Heart right ventricle (tissue), 16 donors: ENCODE measurements at regions of chr1 and their contacts with region 1.

Region 1: DNA sequence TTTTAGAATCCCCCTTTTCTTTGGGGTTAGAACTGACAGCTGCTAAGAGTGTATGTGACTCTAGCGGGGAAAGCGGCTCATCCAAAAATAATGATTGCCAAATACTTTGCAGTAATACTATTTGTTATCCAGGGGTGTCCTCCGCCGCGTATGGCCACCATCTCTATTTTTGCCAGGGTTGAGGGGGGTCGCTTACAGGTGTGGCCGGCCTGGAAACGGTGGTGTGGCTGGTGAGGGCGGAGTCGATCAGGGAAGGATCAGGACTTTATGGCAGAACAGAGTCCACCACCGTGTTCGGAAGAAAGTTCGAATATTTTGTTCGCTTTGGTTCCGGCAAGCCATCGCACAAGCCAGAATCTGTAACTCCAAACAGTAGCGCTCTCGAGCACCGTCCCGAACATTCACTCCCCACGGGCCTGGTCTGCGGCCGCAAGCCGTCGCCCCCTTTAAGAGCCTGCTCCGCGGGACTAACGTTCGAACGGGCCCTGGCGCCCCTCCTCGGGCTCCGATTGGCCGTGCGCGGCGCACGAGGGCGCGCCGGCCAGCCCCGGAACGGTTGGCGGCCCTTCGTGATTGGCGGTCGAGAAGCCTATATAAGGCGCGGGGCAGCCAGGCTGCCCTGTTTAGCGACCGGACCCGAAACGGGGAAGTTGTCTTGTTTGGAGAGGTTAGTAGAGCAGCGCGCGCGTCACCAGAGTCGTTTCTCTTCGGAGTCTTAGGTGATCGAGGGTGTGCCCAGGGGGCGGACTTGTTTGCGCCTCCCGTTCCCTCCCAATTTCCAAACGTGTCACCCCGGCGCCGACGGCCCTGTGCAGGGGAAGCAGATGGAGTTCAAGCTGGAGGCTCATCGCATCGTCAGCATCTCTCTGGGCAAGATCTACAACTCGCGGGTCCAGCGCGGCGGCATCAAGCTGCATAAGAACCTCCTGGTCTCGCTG is at the start of gene IER5:
- DNase-seq: peak; percentile 93 to 98
- ATAC-seq: peak; percentile 92 to 96 (median 94)
- H3K4me3 ChIP-seq: peak within 1 kb of the TSS; percentile 65 to 94 (median 84)
- H3K27ac ChIP-seq: peak within 1 kb of the TSS; percentile 89 to 97 (median 94)
- H3K4me1 ChIP-seq: peaks cover 0 to 56% (median 36%) of the 10 kb centered on the region in 9 donors
- H3K27me3 ChIP-seq: no peaks in the 10 kb centered on the region
- CTCF ChIP-seq: peak in 3 of 9 donors; percentile 7 to 28 (median 15)
- total RNA-seq, gene IER5: 10.7 to 87.5 (median 18.7) TPM

Region 2: GRCh38 chr1:181021811-181022434 is 66.4 kb before region 1 on chr1:
- intact Hi-C with region 1: loop called in 1 of 10 experiments (anchors 5 kb)
- DNase-seq: peak; percentile 62 to 72
- ATAC-seq: peak; percentile 53 to 78 (median 68)
- H3K4me3 ChIP-seq: peak overlapping the region; percentile 61 to 100 (median 86)
- H3K27ac ChIP-seq: peak overlapping the region; percentile 56 to 96 (median 90)
- H3K4me1 ChIP-seq: peaks cover 2 to 40% (median 28%) of the 10 kb centered on the region in 9 donors
- H3K27me3 ChIP-seq: no peaks in the 10 kb centered on the region
- CTCF ChIP-seq: no peak

Region 3: DNA sequence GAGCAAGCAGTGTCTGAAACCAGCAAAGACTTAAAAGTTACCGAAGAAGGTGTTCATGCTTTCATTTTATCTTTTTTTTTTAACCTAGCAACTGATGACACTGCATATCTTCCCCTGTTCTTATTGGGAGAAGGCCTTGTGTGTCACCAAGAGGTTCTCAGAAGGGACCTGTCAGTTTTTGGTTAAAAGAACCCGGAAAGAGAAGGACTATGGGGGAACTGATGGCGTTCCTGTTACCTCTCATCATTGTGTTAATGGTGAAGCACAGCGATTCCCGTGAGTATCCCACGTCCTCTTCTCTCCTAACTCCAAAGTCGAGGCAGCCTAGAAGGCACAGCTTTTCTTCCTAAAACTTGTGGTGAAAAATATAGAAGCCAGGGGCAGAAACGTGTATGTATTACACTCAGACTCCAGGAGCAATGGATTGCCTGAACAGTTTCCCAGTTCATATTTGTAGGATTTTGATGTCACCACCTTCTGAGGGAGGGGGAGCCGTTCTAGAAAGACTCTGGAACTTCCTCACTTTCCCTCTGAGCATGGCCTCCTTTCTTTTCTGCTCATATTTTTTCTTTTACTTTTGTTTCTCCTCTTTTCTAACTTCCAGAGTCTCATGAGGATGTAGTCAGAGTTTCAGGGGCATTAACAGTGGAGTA is 54.4 kb before region 1 on chr1 and contains the start of gene MR1:
- intact Hi-C with region 1: loop called in 5 of 10 experiments (anchors 5 to 10 kb)
- DNase-seq: peak in 1 of 2 donors; percentile 45
- ATAC-seq: peak; percentile 81 to 97 (median 94)
- H3K4me3 ChIP-seq: peak within 1 kb of the TSS in 9 of 10 donors; percentile 41 to 68 (median 50)
- H3K27ac ChIP-seq: peak within 1 kb of the TSS; percentile 75 to 99 (median 84)
- H3K4me1 ChIP-seq: peaks cover 6 to 63% (median 19%) of the 10 kb centered on the region in 9 donors
- H3K27me3 ChIP-seq: no peaks in the 10 kb centered on the region
- CTCF ChIP-seq: no peak
- total RNA-seq, gene MR1: 1.8 to 8.2 (median 3.2) TPM

Region 4: GRCh38 chr1:181062836-181063428 is 25.4 kb before region 1 on chr1:
- intact Hi-C with region 1: no loop called
- DNase-seq: no peak
- ATAC-seq: peak in 5 of 8 donors; percentile 35 to 67 (median 48)
- H3K4me3 ChIP-seq: peak overlapping the region in 1 of 10 donors; percentile 16
- H3K27ac ChIP-seq: peak overlapping the region in 2 of 10 donors; percentile 40 to 77
- H3K4me1 ChIP-seq: peaks cover 0 to 35% (median 13%) of the 10 kb centered on the region in 9 donors
- H3K27me3 ChIP-seq: no peaks in the 10 kb centered on the region
- CTCF ChIP-seq: no peak

Region 5: GRCh38 chr1:181105134-181106021 is 17.0 kb after region 1 on chr1:
- intact Hi-C with region 1: loop called in 4 of 10 experiments (anchors 2 kb)
- DNase-seq: peak; percentile 94 to 98
- ATAC-seq: peak; percentile 93 to 97 (median 94)
- H3K4me3 ChIP-seq: peak overlapping the region; percentile 69 to 93 (median 86)
- H3K27ac ChIP-seq: peak overlapping the region; percentile 80 to 97 (median 92)
- H3K4me1 ChIP-seq: peaks cover 3 to 73% (median 46%) of the 10 kb centered on the region in 9 donors
- H3K27me3 ChIP-seq: no peaks in the 10 kb centered on the region
- CTCF ChIP-seq: no peak

Region 6: DNA sequence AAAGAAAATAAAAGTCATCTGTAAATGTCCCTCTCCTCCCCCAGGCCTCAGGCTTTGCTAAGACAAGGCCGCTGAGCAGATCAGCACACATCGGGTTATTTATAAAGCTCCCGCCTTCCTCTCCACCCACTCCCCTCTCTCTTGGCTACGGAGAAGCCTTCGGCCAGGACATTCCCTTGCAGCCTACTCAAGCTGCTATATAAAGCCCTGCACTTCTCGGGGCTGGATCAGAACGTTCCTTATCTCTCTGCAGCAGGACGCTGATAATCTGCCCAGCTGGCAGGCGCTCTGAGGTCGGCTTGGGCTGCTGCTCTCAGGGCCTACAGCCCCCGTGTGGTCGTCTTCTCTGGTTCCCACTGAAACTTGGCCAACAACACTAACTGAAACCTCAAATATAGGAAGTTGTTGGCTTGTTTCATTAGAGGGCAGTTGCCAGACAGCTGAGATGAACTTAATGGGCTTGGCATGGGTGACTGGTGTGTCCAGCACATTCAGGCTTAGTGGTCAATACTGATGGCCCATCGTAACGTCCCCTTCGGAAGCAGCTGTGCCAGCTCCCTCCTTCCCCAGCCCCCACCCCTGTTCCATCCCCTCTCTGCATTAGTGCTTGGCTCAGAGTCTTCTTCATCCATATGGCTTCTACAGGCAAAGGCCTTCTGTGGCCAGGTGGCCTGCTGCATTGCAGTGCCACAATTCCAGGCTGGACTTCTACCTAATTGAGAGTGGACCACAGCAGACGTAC is 64.7 kb after region 1 on chr1:
- intact Hi-C with region 1: loop called in 1 of 10 experiments (anchors 2 kb)
- DNase-seq: peak; percentile 86 to 92
- ATAC-seq: peak; percentile 92 to 97 (median 96)
- H3K4me3 ChIP-seq: peak overlapping the region in 1 of 10 donors; percentile 9
- H3K27ac ChIP-seq: peak overlapping the region; percentile 75 to 97 (median 92)
- H3K4me1 ChIP-seq: peaks cover 11 to 62% (median 40%) of the 10 kb centered on the region in 9 donors
- H3K27me3 ChIP-seq: no peaks in the 10 kb centered on the region
- CTCF ChIP-seq: peak in 8 of 9 donors; percentile 36 to 65 (median 48)

Region 7: GRCh38 chr1:181159451-181160140 is 71.2 kb after region 1 on chr1:
- intact Hi-C with region 1: loop called in 1 of 10 experiments (anchors 5 kb)
- DNase-seq: peak in 1 of 2 donors; percentile 41
- ATAC-seq: peak in 7 of 8 donors; percentile 50 to 79 (median 71)
- H3K4me3 ChIP-seq: no peak overlapping the region
- H3K27ac ChIP-seq: no peak overlapping the region
- H3K4me1 ChIP-seq: peaks cover 0 to 30% (median 21%) of the 10 kb centered on the region in 9 donors
- H3K27me3 ChIP-seq: no peaks in the 10 kb centered on the region
- CTCF ChIP-seq: no peak